Ovary (tissue), 10 donors: ENCODE measurements at regions of chr18 and their contacts with region 1.

Region 1: DNA sequence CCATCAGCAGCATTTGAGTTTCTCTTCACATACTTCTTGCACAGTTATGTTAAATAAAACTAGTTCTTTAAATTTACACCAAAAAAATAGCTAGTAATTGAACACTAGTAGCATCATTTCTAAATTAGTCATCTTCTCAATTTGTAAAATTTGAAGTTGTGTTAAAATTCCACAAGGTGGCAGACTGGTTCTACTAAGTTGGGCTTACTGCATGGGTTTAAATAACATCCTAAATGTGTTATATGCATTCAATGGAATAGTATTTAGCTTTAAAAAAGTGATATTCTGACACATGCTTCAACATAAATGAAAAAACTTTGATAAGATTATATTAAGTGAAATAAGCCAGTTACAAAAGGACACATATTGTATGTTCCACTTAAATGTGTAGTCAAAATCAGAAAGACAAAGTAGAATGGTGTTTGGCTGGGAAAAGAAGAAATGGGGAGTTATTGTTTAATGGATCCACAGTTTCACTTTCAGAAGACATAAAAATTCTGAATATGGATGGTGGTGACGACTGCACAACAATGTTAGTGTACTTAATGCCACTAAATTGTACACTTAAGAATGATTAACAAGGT is 28.7 kb upstream of the RPRD1A start:
- DNase-seq: no peak
- H3K4me3 ChIP-seq: no peak overlapping the region
- H3K27ac ChIP-seq: no peak overlapping the region
- H3K4me1 ChIP-seq: no peaks in the 10 kb centered on the region
- H3K27me3 ChIP-seq: no peaks in the 10 kb centered on the region
- CTCF ChIP-seq: peak; percentile 39 to 69 (median 49)
- EP300 ChIP-seq: no peak
- POLR2A ChIP-seq: no peak

Region 2: DNA sequence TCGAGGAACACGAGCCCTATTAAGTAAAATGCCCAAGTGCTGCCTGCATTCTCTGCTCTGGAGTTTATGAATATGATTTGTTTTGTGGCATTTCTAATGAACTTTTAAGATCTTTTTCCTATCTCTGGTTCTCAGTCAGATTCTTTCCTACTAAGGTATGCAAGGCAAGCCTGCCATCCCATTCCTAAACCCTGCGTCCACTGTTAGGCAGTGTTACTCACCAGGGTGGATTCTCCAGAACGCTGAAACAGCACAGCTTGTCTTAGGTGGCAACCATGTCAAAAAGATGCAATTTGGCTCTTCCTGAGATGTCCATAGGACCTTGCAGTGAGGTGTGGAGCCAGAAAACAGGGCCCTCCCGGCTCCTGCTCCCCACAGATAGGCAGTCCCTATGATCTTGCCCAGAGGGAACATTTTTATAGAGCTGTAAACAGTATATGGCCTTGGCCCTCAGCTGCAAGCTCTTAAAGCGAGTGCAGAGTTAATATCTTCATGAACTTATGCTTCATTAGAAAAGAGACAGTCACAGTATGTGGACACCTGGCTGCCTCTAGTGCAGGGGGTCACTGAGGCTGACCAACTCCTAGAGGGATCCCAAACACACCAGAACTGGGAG is 648.3 kb after region 1 on chr18:
- intact Hi-C with region 1: loop called in 1 of 4 experiments (anchors 10 kb)
- DNase-seq: no peak
- H3K4me3 ChIP-seq: no peak overlapping the region
- H3K27ac ChIP-seq: no peak overlapping the region
- H3K4me1 ChIP-seq: no peaks in the 10 kb centered on the region
- H3K27me3 ChIP-seq: no peaks in the 10 kb centered on the region
- CTCF ChIP-seq: no peak
- EP300 ChIP-seq: no peak
- POLR2A ChIP-seq: no peak